ENCODE measurements at regions of chr15 and their contacts with region 1.

Region 1: GRCh38 chr15:98085003-98085639 is 124.6 kb downstream of the ARRDC4 start:
- DNase-seq: peak; percentile 69
- ATAC-seq: peak; percentile 62
- H3K4me3 ChIP-seq: no peak overlapping the region
- H3K27ac ChIP-seq: no peak overlapping the region
- H3K4me1 ChIP-seq: no peaks in the 10 kb centered on the region
- H3K27me3 ChIP-seq: no peaks in the 10 kb centered on the region
- CTCF ChIP-seq: peak; percentile 71
- POLR2A ChIP-seq: no peak
- RAD21 ChIP-seq: peak; percentile 64

Region 2: DNA sequence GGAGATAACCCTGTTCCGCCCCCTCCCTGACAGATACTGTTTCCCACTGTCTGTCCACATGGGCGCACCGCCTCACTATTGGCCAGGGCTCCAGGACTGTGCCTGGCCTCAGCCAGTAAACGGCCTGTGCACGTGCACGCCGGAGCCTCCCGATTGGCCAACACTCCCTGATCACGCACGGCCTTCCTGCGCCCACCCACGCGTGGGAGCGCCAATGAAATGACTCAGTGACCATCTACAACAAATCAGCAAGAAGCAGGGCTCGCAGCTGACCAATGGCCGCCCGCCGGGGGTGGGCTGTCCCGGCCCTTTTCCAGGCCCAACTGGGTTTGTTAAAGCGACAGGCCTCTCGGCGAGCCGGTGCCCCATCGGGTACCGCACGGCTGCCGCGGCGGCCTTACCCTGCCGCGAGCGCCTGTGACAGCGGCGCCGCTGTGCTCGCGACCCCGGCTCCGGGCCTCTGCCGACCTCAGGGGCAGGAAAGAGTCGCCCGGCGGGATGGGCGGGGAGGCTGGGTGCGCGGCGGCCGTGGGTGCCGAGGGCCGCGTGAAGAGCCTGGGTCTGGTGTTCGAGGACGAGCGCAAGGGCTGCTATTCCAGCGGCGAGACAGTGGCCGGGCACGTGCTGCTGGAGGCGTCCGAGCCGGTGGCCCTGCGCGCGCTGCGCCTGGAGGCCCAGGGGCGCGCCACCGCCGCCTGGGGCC is 124.6 kb before region 1 on chr15 and contains the start of gene ARRDC4:
- CTCF ChIA-PET with region 1: no interaction called
- POLR2A ChIA-PET with region 1: no interaction called
- dilution Hi-C with region 1: no loop called
- in situ Hi-C with region 1: no loop called
- intact Hi-C with region 1: loop called (anchors 2 kb)
- DNase-seq: peak; percentile 100
- ATAC-seq: peak; percentile 97
- H3K4me3 ChIP-seq: peak within 1 kb of the TSS; percentile 55
- H3K27ac ChIP-seq: peak within 1 kb of the TSS; percentile 2; the same call in 1 of the 2 replicates
- H3K4me1 ChIP-seq: no peaks in the 10 kb centered on the region
- H3K27me3 ChIP-seq: no peaks in the 10 kb centered on the region
- CTCF ChIP-seq: no peak
- POLR2A ChIP-seq: peak; percentile 67
- RAD21 ChIP-seq: no peak
- total RNA-seq, gene ARRDC4: 9.1 and 10.6 TPM in 2 replicates

Region 3: DNA sequence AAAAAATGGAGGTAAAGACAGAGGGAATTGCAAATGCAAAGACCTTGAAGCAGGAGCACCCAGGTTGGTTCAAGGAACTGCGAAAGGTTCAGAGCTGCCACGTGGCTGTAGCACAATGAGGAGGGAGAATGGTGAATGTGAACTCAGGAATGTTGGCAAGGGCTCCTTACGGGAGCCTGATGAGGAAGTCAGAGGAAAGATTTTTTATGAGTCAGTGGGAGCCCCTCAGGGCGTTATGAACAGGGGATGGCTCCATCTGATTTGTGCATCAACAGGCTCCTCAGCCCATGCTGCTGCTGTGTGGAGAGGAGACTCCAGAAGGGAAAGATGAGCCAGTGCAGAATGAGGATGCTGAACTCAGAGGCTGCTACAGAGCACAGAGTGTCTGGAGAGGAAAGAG is 69.7 kb after region 1 on chr15:
- CTCF ChIA-PET with region 1: no interaction called
- POLR2A ChIA-PET with region 1: no interaction called
- dilution Hi-C with region 1: no loop called
- in situ Hi-C with region 1: no loop called
- intact Hi-C with region 1: no loop called
- DNase-seq: peak; percentile 0
- ATAC-seq: no peak
- H3K4me3 ChIP-seq: no peak overlapping the region
- H3K27ac ChIP-seq: no peak overlapping the region
- H3K4me1 ChIP-seq: no peaks in the 10 kb centered on the region
- H3K27me3 ChIP-seq: no peaks in the 10 kb centered on the region
- CTCF ChIP-seq: no peak
- POLR2A ChIP-seq: no peak
- RAD21 ChIP-seq: no peak

Measured in IMR-90 (cell line).